GM10248 (cell line): ENCODE measurements at regions of chr1 and their contacts with region 1.

Region 1: DNA sequence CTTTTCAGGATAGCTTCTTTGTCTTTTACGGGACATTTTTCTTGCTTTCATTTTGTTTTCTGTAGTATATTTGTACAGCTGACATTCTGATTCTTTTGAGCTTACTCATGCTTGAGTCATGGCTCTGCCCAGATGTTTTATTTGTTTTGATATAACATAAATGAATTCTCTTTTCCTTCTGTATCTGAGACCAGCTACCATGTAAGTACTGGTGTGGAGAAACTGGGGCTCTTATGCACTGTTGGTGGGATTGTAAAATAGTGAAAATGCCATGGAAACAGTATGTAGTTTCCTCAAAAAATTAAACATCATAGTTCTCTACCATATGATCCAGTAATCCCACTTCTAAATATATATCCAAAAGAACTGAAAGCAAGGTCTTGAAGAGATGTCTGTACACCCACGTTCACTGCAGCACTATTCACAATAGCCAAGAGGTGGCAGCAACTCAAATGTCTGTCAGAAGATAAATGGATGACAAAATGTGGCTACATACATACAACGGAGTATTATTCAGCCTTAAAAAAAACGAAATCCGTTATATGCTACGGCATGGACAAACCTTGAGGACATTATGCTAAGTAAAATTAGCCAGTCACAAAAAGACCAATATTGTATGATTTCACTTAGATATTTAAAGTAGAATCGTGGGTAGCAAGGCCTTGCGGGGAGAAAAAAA is 61.4 kb downstream of the EIF2B3 start:
- DNase-seq: no peak
- CTCF ChIP-seq: peak; percentile 42

Region 2: DNA sequence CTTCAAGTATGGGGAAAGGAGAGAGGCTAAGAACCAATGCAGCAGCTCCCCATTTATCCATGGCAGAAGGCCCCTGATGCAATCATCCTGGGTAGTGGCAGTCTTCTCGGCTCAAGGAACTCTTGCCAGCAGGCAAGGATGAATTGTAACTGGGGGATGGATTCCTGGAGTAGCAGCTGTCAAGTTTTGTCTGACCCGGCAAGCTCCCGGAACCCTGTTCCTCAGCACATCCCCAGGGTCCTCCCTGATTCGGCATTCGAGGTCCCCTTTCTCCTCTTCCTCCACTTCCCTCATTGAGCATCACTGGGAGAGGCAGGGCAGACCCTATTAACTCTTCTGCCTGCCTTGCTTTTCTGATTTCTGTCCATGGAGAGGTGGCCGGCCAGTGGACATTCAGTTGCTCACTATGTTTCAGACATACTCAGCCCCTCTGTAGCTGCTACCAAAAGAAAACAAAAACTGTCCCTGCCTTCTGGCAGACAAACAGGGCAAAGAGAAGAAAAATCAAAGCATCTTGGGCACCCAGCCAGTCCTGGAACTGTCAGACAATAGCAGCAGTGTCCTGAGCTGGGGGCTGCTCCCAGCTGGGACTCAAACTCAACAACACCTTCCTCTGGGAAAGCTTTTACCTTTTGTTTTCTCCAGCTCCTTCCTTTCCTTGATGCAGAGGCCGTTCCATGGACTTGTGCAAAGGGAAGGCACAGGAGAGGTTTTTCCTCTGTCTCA is 76.4 kb before region 1 on chr1:
- CTCF ChIA-PET with region 1: no interaction called
- POLR2A ChIA-PET with region 1: no interaction called
- DNase-seq: no peak
- CTCF ChIP-seq: no peak

Region 3: GRCh38 chr1:44881011-44881632 is 43.9 kb before region 1 on chr1:
- CTCF ChIA-PET with region 1: no interaction called
- POLR2A ChIA-PET with region 1: no interaction called
- DNase-seq: no peak
- CTCF ChIP-seq: no peak

Region 4: DNA sequence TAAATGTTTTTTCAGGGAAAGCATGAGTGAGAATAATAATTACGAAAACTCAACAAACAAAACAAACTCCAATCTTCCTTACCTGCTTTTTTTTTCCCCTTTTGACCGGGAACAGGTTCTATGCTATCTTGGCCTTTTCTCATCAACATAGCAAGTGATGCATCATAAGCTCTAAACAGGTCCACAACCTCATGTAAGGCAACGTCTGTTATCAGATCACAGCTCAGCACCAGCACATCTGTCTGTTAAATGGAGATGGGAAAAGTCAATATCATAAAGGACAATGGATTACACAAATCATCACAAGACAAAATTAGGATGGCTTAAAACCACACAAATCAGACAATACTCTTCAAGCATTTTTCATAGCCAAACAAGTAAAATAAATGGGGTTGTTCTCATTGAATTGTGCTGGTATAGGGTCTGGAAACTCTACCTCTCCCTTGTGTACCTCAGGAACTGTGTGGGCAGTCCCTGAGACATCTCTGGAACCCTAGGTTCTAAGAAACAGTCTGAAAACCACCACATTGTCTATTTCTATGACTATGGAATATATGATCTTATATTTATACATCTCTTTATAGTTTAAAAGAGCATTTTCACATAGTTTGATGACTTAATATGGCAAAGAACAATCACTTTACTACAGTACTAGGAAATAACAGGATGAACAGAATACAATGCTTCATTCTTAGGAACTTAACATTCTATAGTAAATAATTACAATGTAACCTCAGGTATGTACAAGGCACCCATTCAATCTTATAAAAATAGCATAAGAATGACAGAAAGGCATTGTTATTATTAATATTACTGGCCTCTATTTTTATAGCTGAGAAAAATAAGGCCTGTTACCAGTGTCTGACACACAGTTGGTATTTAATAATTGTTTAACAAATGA is 16.7 kb after region 1 on chr1:
- CTCF ChIA-PET with region 1: interaction called, 11 read pairs
- POLR2A ChIA-PET with region 1: no interaction called
- DNase-seq: no peak
- CTCF ChIP-seq: no peak